Activated CD4-positive, alpha-beta memory T cell treated with anti-CD3 and anti-CD28 coated beads for 36 hours (primary cell): ENCODE measurements at regions of chrX and their contacts with region 1.

Region 1: GRCh38 chrX:54182864-54183608 is at the start of gene FAM120C:
- DNase-seq: peak; percentile 77
- H3K4me3 Mint-ChIP-seq: peak within 1 kb of the TSS; percentile 78
- H3K27ac Mint-ChIP-seq: peak within 1 kb of the TSS; percentile 80
- H3K4me1 Mint-ChIP-seq: peaks cover 41% of the 10 kb centered on the region
- H3K27me3 Mint-ChIP-seq: no peaks in the 10 kb centered on the region
- total RNA-seq, gene FAM120C: 4.5 to 6.1 TPM

Region 2: GRCh38 chrX:54044126-54044876 is 138.7 kb before region 1 on chrX and contains the start of gene PHF8:
- CTCF ChIA-PET with region 1: no interaction called
- POLR2A ChIA-PET with region 1: interaction called, 5 read pairs
- intact Hi-C with region 1: loop called (anchors 1 kb)
- DNase-seq: peak; percentile 96
- H3K4me3 Mint-ChIP-seq: peak within 1 kb of the TSS; percentile 91
- H3K27ac Mint-ChIP-seq: peak within 1 kb of the TSS; percentile 96
- H3K4me1 Mint-ChIP-seq: peaks cover 21% of the 10 kb centered on the region
- H3K27me3 Mint-ChIP-seq: no peaks in the 10 kb centered on the region
- total RNA-seq, gene PHF8: 51.2 to 52.0 TPM

Region 3: GRCh38 chrX:54237014-54237413 is 54.0 kb after region 1 on chrX:
- CTCF ChIA-PET with region 1: no interaction called
- POLR2A ChIA-PET with region 1: no interaction called
- intact Hi-C with region 1: no loop called
- DNase-seq: no peak
- H3K4me3 Mint-ChIP-seq: no peak overlapping the region
- H3K27ac Mint-ChIP-seq: no peak overlapping the region
- H3K4me1 Mint-ChIP-seq: no peaks in the 10 kb centered on the region
- H3K27me3 Mint-ChIP-seq: peaks cover 2% of the 10 kb centered on the region

Region 4: DNA sequence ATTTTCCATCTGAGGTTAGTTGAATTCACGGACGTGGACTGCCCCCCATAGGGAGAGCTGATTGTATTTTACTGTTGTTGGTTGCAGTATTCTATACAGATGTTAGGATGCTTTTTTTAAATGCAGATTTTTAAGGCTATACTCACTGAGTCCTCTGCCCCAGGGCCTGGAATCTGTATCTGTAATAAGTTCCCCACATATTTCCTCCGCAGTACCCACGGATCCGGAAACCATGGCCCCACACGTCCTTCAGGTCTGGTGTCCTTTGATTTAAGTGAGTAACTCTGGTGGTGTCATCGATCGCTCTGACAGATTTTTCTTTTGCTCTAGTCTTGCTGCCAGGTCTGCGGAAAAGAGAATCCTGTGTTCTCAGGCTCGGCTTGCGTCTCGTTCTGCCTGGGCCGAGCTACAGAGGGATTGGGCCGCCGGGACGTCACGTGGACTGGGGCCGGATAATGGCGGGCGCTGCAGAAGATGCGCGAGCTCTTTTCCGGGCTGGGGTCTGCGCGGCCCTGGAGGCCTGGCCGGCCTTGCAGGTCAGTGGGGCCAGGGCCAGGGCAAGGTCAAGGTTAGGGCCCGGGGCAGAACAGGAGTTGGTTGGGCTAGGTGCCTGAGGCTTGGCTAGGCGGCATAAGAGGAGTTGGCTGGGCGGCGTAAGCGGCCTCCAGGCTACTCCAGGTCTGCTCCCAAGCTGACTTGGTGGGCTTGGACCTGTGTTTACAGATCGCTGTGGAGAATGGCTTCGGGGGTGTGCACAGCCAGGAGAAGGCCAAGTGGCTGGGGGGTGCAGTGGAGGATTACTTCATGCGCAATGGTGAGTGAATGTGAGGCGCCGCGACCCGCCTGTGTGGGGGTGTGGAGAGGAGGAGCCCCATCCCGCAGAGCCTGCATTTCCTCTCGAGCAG is 257.2 kb after region 1 on chrX and contains the start of gene TSR2:
- CTCF ChIA-PET with region 1: no interaction called
- POLR2A ChIA-PET with region 1: no interaction called
- intact Hi-C with region 1: loop called (anchors 1 kb)
- DNase-seq: peak; percentile 88
- H3K4me3 Mint-ChIP-seq: peak within 1 kb of the TSS; percentile 90
- H3K27ac Mint-ChIP-seq: peak within 1 kb of the TSS; percentile 78
- H3K4me1 Mint-ChIP-seq: peaks cover 26% of the 10 kb centered on the region
- H3K27me3 Mint-ChIP-seq: no peaks in the 10 kb centered on the region
- total RNA-seq, gene TSR2: 24.1 to 25.4 TPM

Region 5: GRCh38 chrX:54639346-54640102 is 456.5 kb after region 1 on chrX:
- CTCF ChIA-PET with region 1: no interaction called
- POLR2A ChIA-PET with region 1: interaction called, 4 read pairs
- intact Hi-C with region 1: loop called (anchors 2 kb)
- DNase-seq: peak; percentile 95
- H3K4me3 Mint-ChIP-seq: peak overlapping the region; percentile 90
- H3K27ac Mint-ChIP-seq: peak overlapping the region; percentile 99
- H3K4me1 Mint-ChIP-seq: peaks cover 5% of the 10 kb centered on the region
- H3K27me3 Mint-ChIP-seq: no peaks in the 10 kb centered on the region

Region 6: GRCh38 chrX:54999717-55000598 is 816.9 kb after region 1 on chrX and contains the start of gene APEX2:
- CTCF ChIA-PET with region 1: no interaction called
- POLR2A ChIA-PET with region 1: no interaction called
- intact Hi-C with region 1: loop called (anchors 5 kb)
- DNase-seq: peak; percentile 92
- H3K4me3 Mint-ChIP-seq: peak within 1 kb of the TSS; percentile 92
- H3K27ac Mint-ChIP-seq: peak within 1 kb of the TSS; percentile 87
- H3K4me1 Mint-ChIP-seq: peaks cover 17% of the 10 kb centered on the region
- H3K27me3 Mint-ChIP-seq: no peaks in the 10 kb centered on the region
- total RNA-seq, gene APEX2: 32.7 to 32.9 TPM